ENCODE measurements at regions of chr1 and their contacts with region 1.

Region 1: GRCh38 chr1:61337981-61338848 is 255.9 kb downstream of the NFIA start:
- DNase-seq: peak; percentile 66
- ATAC-seq: peak; percentile 94 to 98
- H3K4me3 ChIP-seq: peak overlapping the region; percentile 24
- H3K27ac ChIP-seq: peak overlapping the region; percentile 83
- H3K4me1 ChIP-seq: peaks cover 28% of the 10 kb centered on the region
- H3K27me3 ChIP-seq: no peaks in the 10 kb centered on the region
- CTCF ChIP-seq: peak; percentile 77

Region 2: DNA sequence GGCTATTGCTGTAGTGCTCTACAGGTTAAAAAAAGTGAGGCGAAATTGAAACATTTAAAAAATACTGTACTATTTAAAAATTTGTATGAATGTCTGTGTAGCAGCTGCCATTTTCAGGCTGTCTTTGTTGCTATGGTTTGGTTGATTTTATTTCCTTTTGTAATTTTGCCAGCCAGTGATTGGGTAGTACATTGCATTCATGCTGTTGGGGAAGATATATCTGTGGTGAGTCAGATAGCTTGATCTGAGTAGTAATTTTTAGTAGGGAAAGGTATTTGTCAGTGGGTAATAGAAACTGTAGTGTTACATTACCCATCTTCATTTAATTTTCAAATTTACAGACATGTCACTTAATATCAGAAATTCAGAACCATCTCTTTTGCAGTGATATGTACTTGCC is 240.9 kb before region 1 on chr1:
- intact Hi-C with region 1: loop called (anchors 10 kb)
- DNase-seq: no peak
- ATAC-seq: no peak
- H3K4me3 ChIP-seq: no peak overlapping the region
- H3K27ac ChIP-seq: no peak overlapping the region
- H3K4me1 ChIP-seq: peaks cover 22% of the 10 kb centered on the region
- H3K27me3 ChIP-seq: no peaks in the 10 kb centered on the region
- CTCF ChIP-seq: no peak